Uterus (tissue), 4 donors: ENCODE measurements at regions of chr19 and their contacts with region 1.

Region 1: GRCh38 chr19:31338069-31338776 is 11.0 kb downstream of the TSHZ3 start:
- DNase-seq: peak; percentile 77 to 79
- H3K4me3 ChIP-seq: peak overlapping the region in 1 of 2 donors; percentile 1
- H3K27ac ChIP-seq: peak overlapping the region; percentile 77 to 80
- H3K4me1 ChIP-seq: peaks cover 13 to 23% of the 10 kb centered on the region in 2 donors
- H3K27me3 ChIP-seq: no peaks in the 10 kb centered on the region
- CTCF ChIP-seq: peak; percentile 46 to 73 (median 58)
- POLR2A ChIP-seq: no peak

Region 2: DNA sequence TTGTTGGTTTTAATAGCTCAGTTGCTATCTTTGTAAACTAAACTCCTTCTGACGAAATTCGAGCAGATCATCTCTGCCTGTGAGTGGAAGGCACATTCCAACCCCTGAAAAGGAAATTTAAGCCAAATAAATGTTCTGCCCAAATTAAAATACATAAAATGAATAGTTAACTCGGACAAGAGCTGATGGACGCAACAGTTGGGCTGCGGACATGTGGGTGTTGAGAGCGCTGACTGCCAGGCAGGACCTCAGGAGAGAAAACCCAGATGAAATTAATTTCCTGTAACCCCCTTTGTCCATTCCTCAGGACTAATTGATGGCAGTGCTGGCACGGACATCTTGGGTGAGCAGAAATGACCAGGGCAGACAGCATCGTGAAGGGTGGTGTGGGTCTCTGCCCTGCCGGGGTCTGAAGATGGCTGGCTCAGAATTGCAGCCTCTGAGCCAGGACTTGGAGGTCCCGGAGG is 75.5 kb before region 1 on chr19:
- intact Hi-C with region 1: loop called (anchors 10 kb)
- DNase-seq: peak in 1 of 2 donors; percentile 51
- H3K4me3 ChIP-seq: no peak overlapping the region
- H3K27ac ChIP-seq: peak overlapping the region; percentile 56 to 59
- H3K4me1 ChIP-seq: no peaks in the 10 kb centered on the region
- H3K27me3 ChIP-seq: no peaks in the 10 kb centered on the region
- CTCF ChIP-seq: no peak
- POLR2A ChIP-seq: no peak

Region 3: GRCh38 chr19:31275068-31275334 is 63.2 kb before region 1 on chr19:
- intact Hi-C with region 1: no loop called
- DNase-seq: no peak
- H3K4me3 ChIP-seq: peak overlapping the region in 1 of 2 donors; percentile 12
- H3K27ac ChIP-seq: peak overlapping the region; percentile 68 to 71
- H3K4me1 ChIP-seq: peaks cover 0 to 10% of the 10 kb centered on the region in 2 donors
- H3K27me3 ChIP-seq: no peaks in the 10 kb centered on the region
- CTCF ChIP-seq: no peak
- POLR2A ChIP-seq: no peak